ENCODE measurements at regions of chr18 and their contacts with region 1.

Region 1: DNA sequence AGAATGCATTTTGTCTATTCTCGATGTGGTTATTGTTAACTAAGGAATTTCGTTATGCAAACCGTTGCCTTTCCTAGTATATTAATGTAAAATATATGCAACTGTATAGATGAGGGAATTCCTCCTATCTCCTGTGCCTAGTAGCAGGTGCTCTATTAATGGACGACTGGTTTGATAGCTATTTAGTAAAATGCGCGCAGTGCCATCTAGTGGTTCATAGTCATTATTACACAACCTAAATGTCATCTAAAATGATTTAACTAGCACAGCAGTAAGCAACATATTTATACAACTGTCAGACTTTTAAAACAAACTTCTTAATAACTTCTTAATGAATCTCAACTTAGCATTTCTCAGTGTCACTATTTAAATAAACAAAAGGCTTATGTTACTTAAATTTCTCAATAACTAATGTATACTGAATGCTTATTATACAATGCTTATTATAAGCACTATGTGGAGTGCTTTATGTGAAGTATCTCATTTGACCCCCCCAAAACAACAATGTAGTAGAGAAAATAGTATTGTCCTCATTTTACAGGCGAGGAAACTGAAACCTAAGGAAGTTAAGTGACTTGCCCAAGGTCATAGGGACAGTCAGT is 77.9 kb downstream of the DTNA start:
- DNase-seq: peak; percentile 58
- ATAC-seq: no peak
- H3K4me3 ChIP-seq: no peak overlapping the region
- H3K27ac ChIP-seq: no peak overlapping the region
- H3K4me1 ChIP-seq: no peaks in the 10 kb centered on the region
- H3K27me3 ChIP-seq: no peaks in the 10 kb centered on the region
- CTCF ChIP-seq: peak; percentile 58

Region 2: DNA sequence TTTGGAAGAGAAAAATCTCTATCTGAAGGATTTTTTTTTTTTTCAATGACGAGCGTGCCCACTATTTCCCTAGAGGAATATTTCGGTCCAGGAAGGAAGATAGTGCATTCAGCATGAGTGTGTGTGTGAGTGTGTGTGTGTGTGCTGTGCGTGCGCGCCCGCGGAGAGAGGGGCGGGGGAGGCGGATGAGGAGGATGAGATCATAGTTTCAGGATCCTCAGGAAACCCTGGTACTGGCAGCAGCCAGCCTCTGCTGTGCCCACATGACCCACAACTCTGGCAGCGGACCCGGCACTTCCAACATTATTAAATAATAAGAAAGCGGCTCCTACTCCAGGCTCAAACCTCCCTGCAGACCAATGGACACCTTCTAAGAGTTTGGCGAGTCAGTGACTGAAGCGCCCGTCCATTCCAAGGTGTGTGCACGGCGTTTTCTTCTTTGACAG is 294.9 kb before region 1 on chr18:
- CTCF ChIA-PET with region 1: no interaction called
- POLR2A ChIA-PET with region 1: no interaction called
- intact Hi-C with region 1: loop called (anchors 10 kb)
- DNase-seq: peak; percentile 64
- ATAC-seq: peak; percentile 75
- H3K4me3 ChIP-seq: peak overlapping the region; percentile 70
- H3K27ac ChIP-seq: peak overlapping the region; percentile 79
- H3K4me1 ChIP-seq: peaks cover 6% of the 10 kb centered on the region; the same call in 1 of the 2 replicates
- H3K27me3 ChIP-seq: no peaks in the 10 kb centered on the region
- CTCF ChIP-seq: no peak

Region 3: GRCh38 chr18:34567857-34568256 is 220.2 kb before region 1 on chr18:
- CTCF ChIA-PET with region 1: no interaction called
- POLR2A ChIA-PET with region 1: no interaction called
- intact Hi-C with region 1: no loop called
- DNase-seq: no peak
- ATAC-seq: no peak
- H3K4me3 ChIP-seq: no peak overlapping the region
- H3K27ac ChIP-seq: no peak overlapping the region
- H3K4me1 ChIP-seq: no peaks in the 10 kb centered on the region
- H3K27me3 ChIP-seq: no peaks in the 10 kb centered on the region
- CTCF ChIP-seq: no peak

Region 4: GRCh38 chr18:34595673-34596303 is 192.2 kb before region 1 on chr18:
- CTCF ChIA-PET with region 1: no interaction called
- POLR2A ChIA-PET with region 1: no interaction called
- intact Hi-C with region 1: loop called (anchors 1 kb)
- DNase-seq: peak; percentile 8
- ATAC-seq: peak; percentile 42; the same call in 1 of the 2 replicates
- H3K4me3 ChIP-seq: no peak overlapping the region
- H3K27ac ChIP-seq: no peak overlapping the region
- H3K4me1 ChIP-seq: peaks cover 6% of the 10 kb centered on the region
- H3K27me3 ChIP-seq: no peaks in the 10 kb centered on the region
- CTCF ChIP-seq: peak; percentile 42; the same call in 1 of the 2 replicates

Region 5: DNA sequence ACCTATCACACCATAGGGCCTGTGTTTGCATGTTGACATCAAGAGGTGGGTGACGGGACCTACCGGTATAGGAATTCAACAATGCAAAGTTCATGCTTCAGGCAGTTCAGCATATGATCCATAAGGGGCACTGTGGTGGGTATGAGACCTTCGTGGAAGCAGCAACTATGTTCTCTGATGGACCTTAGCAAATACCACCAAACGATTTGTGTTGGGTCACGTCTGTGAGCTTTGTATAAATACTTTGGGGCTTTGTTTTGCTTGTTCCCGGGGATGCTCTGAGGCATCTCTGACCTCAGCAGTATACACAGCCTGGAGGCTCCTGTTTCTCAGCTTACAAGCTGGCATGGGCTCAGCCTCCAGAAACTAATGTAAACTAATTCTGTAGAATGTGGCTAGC is 33.7 kb after region 1 on chr18:
- CTCF ChIA-PET with region 1: no interaction called
- POLR2A ChIA-PET with region 1: no interaction called
- intact Hi-C with region 1: no loop called
- DNase-seq: no peak
- ATAC-seq: peak; percentile 27; the same call in 1 of the 2 replicates
- H3K4me3 ChIP-seq: no peak overlapping the region
- H3K27ac ChIP-seq: no peak overlapping the region
- H3K4me1 ChIP-seq: no peaks in the 10 kb centered on the region
- H3K27me3 ChIP-seq: no peaks in the 10 kb centered on the region
- CTCF ChIP-seq: no peak